ENCODE measurements at regions of chr7 and their contacts with region 1.

Region 1: GRCh38 chr7:141001122-141001521 is 13.6 kb downstream of the MRPS33 start:
- DNase-seq: no peak
- H3K4me3 ChIP-seq: no peak overlapping the region
- H3K27ac ChIP-seq: no peak overlapping the region
- H3K4me1 ChIP-seq: no peaks in the 10 kb centered on the region
- H3K27me3 ChIP-seq: no peaks in the 10 kb centered on the region
- CTCF ChIP-seq: no peak
- POLR2A ChIP-seq: no peak

Region 2: DNA sequence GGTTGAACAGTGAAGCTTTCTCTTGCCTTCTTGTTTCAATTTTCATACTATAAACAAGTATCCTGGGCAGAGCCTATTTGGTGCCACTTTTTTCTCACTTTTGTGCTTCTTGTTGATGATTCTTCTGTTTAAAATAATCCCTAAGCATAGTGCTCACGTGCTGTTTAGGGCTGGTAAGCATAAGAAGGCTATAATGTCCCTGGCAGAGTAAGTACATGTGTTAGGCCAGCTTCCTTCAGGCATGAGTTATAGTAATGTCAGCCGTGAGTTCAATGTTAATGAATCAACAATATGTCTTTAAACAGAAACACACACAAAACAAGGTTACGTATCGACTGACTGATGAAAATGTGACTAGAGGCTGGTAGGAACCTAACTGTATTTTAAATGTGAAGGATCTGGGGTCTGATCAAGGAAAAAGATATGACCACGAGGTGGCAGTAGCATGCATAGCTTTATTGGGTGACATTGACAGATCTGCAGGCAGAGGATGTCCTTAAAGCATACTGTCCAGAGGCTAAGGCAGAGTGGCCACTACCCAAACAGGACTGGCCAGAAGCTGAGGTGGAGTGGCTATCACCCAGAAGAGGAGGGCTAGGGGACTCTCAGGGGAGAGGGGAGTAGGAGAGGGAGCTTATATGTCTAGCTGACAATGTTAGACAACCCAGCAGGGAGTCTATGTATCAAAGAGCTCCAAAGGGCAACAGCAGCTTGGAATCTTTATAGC is 190.1 kb before region 1 on chr7:
- intact Hi-C with region 1: loop called (anchors 10 kb)
- DNase-seq: no peak
- H3K4me3 ChIP-seq: no peak overlapping the region
- H3K27ac ChIP-seq: no peak overlapping the region
- H3K4me1 ChIP-seq: no peaks in the 10 kb centered on the region
- H3K27me3 ChIP-seq: no peaks in the 10 kb centered on the region
- CTCF ChIP-seq: peak; percentile 52 to 72 (median 60)
- POLR2A ChIP-seq: no peak

Region 3: GRCh38 chr7:140889645-140890044 is 111.5 kb before region 1 on chr7:
- intact Hi-C with region 1: no loop called
- DNase-seq: no peak
- H3K4me3 ChIP-seq: no peak overlapping the region
- H3K27ac ChIP-seq: no peak overlapping the region
- H3K4me1 ChIP-seq: no peaks in the 10 kb centered on the region
- H3K27me3 ChIP-seq: no peaks in the 10 kb centered on the region
- CTCF ChIP-seq: no peak
- POLR2A ChIP-seq: no peak

Region 4: DNA sequence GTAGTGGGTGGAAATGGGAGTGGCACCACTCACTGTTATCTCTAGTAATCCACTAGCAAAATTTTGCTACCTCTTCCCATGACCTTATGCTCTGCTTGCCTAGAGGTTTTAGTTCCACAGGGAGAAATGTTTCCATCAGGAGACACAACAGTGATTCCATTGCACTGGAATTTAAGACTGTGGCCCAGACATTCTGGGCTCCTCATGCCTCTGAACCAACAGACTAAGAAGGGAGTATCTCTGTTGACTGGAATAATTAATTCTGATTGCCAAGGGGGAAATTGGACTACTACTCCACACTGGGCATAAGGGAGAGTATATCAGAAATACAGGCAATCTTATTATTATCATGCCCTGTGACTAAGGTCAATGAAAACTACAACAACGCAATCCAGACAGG is 60.2 kb before region 1 on chr7:
- intact Hi-C with region 1: no loop called
- DNase-seq: no peak
- H3K4me3 ChIP-seq: no peak overlapping the region
- H3K27ac ChIP-seq: no peak overlapping the region
- H3K4me1 ChIP-seq: no peaks in the 10 kb centered on the region
- H3K27me3 ChIP-seq: no peaks in the 10 kb centered on the region
- CTCF ChIP-seq: no peak
- POLR2A ChIP-seq: no peak